MCF 10A (cell line): ENCODE measurements at regions of chr5 and their contacts with region 1.

Region 1: DNA sequence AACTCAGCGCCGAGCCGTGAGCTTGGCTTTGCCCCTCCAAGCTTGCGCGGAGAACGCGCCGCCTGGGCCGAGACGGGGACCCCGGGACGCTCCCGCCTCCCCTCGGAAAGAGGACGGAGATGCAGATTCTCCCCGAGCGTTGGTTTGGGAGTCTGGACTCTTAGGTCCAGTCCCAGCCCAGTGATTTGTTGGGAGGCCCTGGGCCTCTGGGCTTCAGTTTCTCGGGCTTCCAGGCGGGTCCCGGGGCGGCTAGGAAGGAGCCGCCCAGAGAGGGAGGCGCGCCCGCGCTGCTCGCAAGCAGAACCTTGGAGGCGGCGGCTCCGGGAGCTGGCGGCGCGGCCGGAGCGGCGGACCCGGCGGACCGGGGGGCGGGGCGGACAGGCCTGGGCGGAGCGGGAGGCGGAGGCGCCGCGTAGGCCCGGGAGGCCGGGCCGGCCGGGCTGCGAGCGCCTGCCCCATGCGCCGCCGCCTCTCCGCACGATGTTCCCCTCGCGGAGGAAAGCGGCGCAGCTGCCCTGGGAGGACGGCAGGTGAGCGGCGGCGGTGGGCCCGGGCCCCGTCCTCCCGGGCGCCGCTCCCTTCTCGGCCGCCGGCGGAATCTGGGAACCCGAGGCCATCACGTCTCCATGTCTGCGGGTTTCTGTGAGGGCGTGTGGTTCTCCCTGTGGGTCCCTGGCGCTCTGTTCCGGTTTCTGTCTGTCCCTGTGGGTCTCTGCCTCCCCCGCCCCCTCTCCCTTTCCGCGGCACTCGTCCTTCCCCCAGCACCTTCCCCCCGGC is at the start of gene B4GALT7:
- DNase-seq: peak; percentile 85
- H3K4me3 Mint-ChIP-seq: peak within 1 kb of the TSS; percentile 85
- H3K27ac Mint-ChIP-seq: peak within 1 kb of the TSS; percentile 93
- H3K4me1 Mint-ChIP-seq: peaks cover 35% of the 10 kb centered on the region
- H3K27me3 Mint-ChIP-seq: no peaks in the 10 kb centered on the region
- CTCF ChIP-seq: no peak
- total RNA-seq, gene B4GALT7: 37.9 and 38.8 TPM in 2 replicates

Region 2: GRCh38 chr5:178163772-178164735 is 564.1 kb after region 1 on chr5:
- CTCF ChIA-PET with region 1: no interaction called
- POLR2A ChIA-PET with region 1: no interaction called
- intact Hi-C with region 1: loop called (anchors 10 kb)
- DNase-seq: peak; percentile 88
- H3K4me3 Mint-ChIP-seq: peak overlapping the region; percentile 8
- H3K27ac Mint-ChIP-seq: no peak overlapping the region
- H3K4me1 Mint-ChIP-seq: no peaks in the 10 kb centered on the region
- H3K27me3 Mint-ChIP-seq: peaks cover 33% of the 10 kb centered on the region
- CTCF ChIP-seq: peak; percentile 100